ENCODE measurements at regions of chr6 and their contacts with region 1.

Region 1: GRCh38 chr6:121849477-121849876 is 414.0 kb downstream of the GJA1 start:
- DNase-seq: peak in 1 of 2 experiments; percentile 35
- H3K4me3 ChIP-seq: no peak overlapping the region
- H3K27ac ChIP-seq: no peak overlapping the region
- H3K4me1 ChIP-seq: no peaks in the 10 kb centered on the region
- H3K27me3 ChIP-seq: no peaks in the 10 kb centered on the region
- CTCF ChIP-seq: peak; percentile 83

Region 2: DNA sequence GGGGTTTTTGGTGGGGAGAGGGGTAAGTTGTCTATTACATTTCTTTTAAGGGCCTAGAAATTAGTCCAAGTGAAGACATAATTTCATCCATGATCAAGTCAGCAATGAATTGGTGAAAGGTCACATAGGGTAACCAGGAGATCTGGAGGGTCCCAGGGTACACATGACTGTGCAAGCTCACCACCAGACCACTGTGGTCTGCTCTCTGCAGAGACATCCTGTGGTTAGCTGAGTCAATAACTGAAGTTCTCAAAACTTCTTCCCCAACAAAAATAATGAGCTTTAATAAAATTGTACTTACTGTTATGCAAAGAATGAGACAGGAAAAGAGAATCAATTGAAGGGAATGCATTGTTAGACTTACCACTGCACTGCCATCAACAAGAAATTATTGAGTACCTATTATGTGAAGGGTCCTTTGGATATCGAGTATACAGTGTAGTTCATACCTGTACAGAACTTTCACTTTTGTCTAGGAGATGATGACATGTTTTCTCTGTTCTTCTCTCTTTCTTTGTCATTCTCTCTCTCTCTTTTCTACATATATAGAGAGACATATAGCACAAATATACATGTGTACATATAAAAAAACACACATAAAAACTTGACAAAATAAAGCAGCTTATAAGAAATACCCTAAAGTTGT is 204.3 kb before region 1 on chr6:
- CTCF ChIA-PET with region 1: no interaction called
- POLR2A ChIA-PET with region 1: no interaction called
- intact Hi-C with region 1: no loop called
- DNase-seq: no peak
- H3K4me3 ChIP-seq: no peak overlapping the region
- H3K27ac ChIP-seq: no peak overlapping the region
- H3K4me1 ChIP-seq: no peaks in the 10 kb centered on the region
- H3K27me3 ChIP-seq: no peaks in the 10 kb centered on the region
- CTCF ChIP-seq: no peak

Region 3: GRCh38 chr6:122033539-122034181 is 184.2 kb after region 1 on chr6:
- CTCF ChIA-PET with region 1: no interaction called
- POLR2A ChIA-PET with region 1: no interaction called
- intact Hi-C with region 1: loop called (anchors 1 kb)
- DNase-seq: peak in 1 of 2 experiments; percentile 76
- H3K4me3 ChIP-seq: no peak overlapping the region
- H3K27ac ChIP-seq: no peak overlapping the region
- H3K4me1 ChIP-seq: peaks cover 13% of the 10 kb centered on the region
- H3K27me3 ChIP-seq: no peaks in the 10 kb centered on the region
- CTCF ChIP-seq: peak; percentile 92